Panc1 (cell line): ENCODE measurements at regions of chr18 and their contacts with region 1.

Region 1: GRCh38 chr18:75297731-75298130 is 87.1 kb downstream of the TSHZ1 start:
- DNase-seq: no peak
- ATAC-seq: no peak
- H3K4me3 ChIP-seq: no peak overlapping the region
- H3K27ac ChIP-seq: no peak overlapping the region
- H3K4me1 ChIP-seq: no peaks in the 10 kb centered on the region
- H3K27me3 ChIP-seq: no peaks in the 10 kb centered on the region; the same call in 1 of the 2 replicates
- CTCF ChIP-seq: no peak

Region 2: GRCh38 chr18:75261430-75262223 is 36.1 kb before region 1 on chr18:
- CTCF ChIA-PET with region 1: no interaction called
- POLR2A ChIA-PET with region 1: no interaction called
- in situ Hi-C with region 1: loop called (anchors 5 kb)
- intact Hi-C with region 1: no loop called
- DNase-seq: no peak
- ATAC-seq: no peak
- H3K4me3 ChIP-seq: no peak overlapping the region
- H3K27ac ChIP-seq: no peak overlapping the region
- H3K4me1 ChIP-seq: no peaks in the 10 kb centered on the region
- H3K27me3 ChIP-seq: no peaks in the 10 kb centered on the region
- CTCF ChIP-seq: no peak

Region 3: DNA sequence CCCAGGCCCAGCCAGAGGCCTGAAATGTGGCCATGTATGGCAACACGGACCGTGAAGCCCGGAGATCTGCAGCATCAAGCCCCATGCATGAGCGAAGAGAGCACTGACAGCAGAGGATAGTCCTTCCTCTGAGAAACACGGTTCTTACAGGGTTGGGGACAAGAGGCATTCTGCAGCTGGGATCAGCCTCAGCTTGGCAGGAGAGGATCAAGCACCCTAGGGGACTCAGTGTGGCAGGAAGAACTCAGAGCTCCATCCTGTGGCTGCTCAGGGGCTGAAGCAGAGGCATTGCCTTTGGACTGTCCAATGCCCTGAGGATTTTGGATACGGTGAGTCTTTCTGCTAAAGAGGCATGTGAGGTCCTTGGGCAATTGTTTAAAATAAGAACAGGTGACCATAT is 828.6 kb after region 1 on chr18:
- CTCF ChIA-PET with region 1: no interaction called
- POLR2A ChIA-PET with region 1: no interaction called
- in situ Hi-C with region 1: no loop called
- intact Hi-C with region 1: no loop called
- DNase-seq: no peak
- ATAC-seq: 0 out of 2 replicates have a peak, but pooled peaks have one; percentile 58
- H3K4me3 ChIP-seq: no peak overlapping the region
- H3K27ac ChIP-seq: no peak overlapping the region
- H3K4me1 ChIP-seq: no peaks in the 10 kb centered on the region
- H3K27me3 ChIP-seq: peaks cover 2% of the 10 kb centered on the region; the same call in 1 of the 2 replicates
- CTCF ChIP-seq: peak; percentile 26; the same call in 1 of the 2 replicates